Stomach (tissue), 19 donors: ENCODE measurements at regions of chr1 and their contacts with region 1.

Region 1: GRCh38 chr1:227542143-227543120 is 20.9 kb upstream of the ZNF678 start:
- DNase-seq: peak; percentile 88 to 96
- H3K4me3 ChIP-seq: peak overlapping the region; percentile 55 to 82 (median 80)
- H3K27ac ChIP-seq: peak overlapping the region; percentile 59 to 85 (median 75)
- H3K4me1 ChIP-seq: peaks cover 0 to 21% (median 15%) of the 10 kb centered on the region in 4 donors
- H3K27me3 ChIP-seq: no peaks in the 10 kb centered on the region
- CTCF ChIP-seq: peak in 5 of 7 experiments; percentile 47 to 99 (median 96)
- EP300 ChIP-seq: no peak
- POLR2A ChIP-seq: no peak

Region 2: GRCh38 chr1:227734856-227735538 is 192.6 kb after region 1 on chr1 and contains the starts of genes JMJD4 and SNAP47:
- intact Hi-C with region 1: loop called (anchors 10 kb)
- DNase-seq: peak; percentile 94 to 97
- H3K4me3 ChIP-seq: peak within 1 kb of the TSS; percentile 76 to 100 (median 90)
- H3K27ac ChIP-seq: peak within 1 kb of the TSS; percentile 85 to 94 (median 88)
- H3K4me1 ChIP-seq: peaks cover 24 to 63% (median 46%) of the 10 kb centered on the region in 4 donors
- H3K27me3 ChIP-seq: no peaks in the 10 kb centered on the region
- CTCF ChIP-seq: no peak
- EP300 ChIP-seq: no peak
- POLR2A ChIP-seq: peak in 1 of 4 donors; percentile 33
- total RNA-seq, gene JMJD4: 2.3 to 26.8 (median 17.5) TPM
- total RNA-seq, gene SNAP47: 24.8 to 117 (median 73.0) TPM